Panc1 (cell line): ENCODE measurements at regions of chr6 and their contacts with region 1.

Region 1: GRCh38 chr6:33761922-33762629 is 15.4 kb upstream of the IP6K3 start:
- DNase-seq: no peak
- ATAC-seq: peak; percentile 93
- H3K4me3 ChIP-seq: no peak overlapping the region
- H3K27ac ChIP-seq: no peak overlapping the region
- H3K4me1 ChIP-seq: peaks cover 15% of the 10 kb centered on the region
- H3K27me3 ChIP-seq: no peaks in the 10 kb centered on the region
- CTCF ChIP-seq: peak; percentile 93

Region 2: GRCh38 chr6:33425668-33426577 is 336.2 kb before region 1 on chr6:
- CTCF ChIA-PET with region 1: no interaction called
- POLR2A ChIA-PET with region 1: no interaction called
- in situ Hi-C with region 1: no loop called
- intact Hi-C with region 1: no loop called
- DNase-seq: no peak
- ATAC-seq: peak; percentile 83
- H3K4me3 ChIP-seq: peak overlapping the region; percentile 46 to 91
- H3K27ac ChIP-seq: peak overlapping the region; percentile 81
- H3K4me1 ChIP-seq: peaks cover 29% of the 10 kb centered on the region
- H3K27me3 ChIP-seq: no peaks in the 10 kb centered on the region
- CTCF ChIP-seq: peak; percentile 88

Region 3: DNA sequence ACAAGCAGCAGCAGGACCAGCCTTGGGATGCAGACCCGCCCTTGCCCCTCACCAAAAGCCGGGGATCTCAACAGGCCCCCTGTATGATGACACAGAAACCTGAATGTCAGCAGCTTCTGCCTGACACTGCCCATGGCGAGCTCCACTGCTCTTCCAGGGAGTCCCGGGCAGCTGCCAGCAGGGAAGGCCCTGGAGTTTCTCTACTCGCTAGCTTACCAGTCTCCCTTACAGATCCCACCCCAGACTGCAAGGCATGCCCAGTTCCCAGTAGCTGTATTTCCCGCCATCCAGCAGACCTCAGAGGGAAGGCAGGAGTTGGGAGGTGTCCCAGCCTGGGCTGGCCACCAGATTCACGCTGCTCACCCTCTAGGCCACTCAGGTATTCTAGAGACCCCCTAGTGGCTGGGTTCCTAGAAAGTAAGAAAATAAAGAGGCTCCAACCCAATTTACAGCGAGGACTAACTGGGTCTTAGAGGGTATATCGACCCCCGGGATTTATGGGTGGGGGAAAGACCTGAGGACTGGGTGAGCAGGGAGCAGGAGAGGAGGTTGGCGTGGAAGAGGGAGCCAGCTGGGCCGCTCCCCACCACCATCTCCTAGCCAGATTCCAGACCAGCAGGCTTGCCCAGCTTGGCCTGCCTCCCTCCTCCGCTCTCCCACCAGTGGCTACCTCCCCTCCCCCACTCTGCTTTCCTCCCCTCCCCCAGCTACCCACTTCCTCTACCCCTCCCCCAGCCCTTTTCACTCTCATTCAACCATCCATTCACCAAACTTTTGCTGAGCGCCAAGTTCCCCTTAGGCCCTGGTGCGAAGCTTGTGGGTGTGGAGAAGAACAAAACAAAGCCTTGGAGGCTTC is 464.9 kb after region 1 on chr6:
- CTCF ChIA-PET with region 1: no interaction called
- POLR2A ChIA-PET with region 1: interaction called, 12 read pairs
- in situ Hi-C with region 1: no loop called
- intact Hi-C with region 1: no loop called
- DNase-seq: no peak
- ATAC-seq: no peak
- H3K4me3 ChIP-seq: no peak overlapping the region
- H3K27ac ChIP-seq: peak overlapping the region; percentile 62; the same call in 1 of the 2 replicates
- H3K4me1 ChIP-seq: peaks cover 29% of the 10 kb centered on the region
- H3K27me3 ChIP-seq: no peaks in the 10 kb centered on the region
- CTCF ChIP-seq: no peak